Right ventricle myocardium inferior (tissue), 1 donor: ENCODE measurements at regions of chr16 and their contacts with region 1.

Region 1: DNA sequence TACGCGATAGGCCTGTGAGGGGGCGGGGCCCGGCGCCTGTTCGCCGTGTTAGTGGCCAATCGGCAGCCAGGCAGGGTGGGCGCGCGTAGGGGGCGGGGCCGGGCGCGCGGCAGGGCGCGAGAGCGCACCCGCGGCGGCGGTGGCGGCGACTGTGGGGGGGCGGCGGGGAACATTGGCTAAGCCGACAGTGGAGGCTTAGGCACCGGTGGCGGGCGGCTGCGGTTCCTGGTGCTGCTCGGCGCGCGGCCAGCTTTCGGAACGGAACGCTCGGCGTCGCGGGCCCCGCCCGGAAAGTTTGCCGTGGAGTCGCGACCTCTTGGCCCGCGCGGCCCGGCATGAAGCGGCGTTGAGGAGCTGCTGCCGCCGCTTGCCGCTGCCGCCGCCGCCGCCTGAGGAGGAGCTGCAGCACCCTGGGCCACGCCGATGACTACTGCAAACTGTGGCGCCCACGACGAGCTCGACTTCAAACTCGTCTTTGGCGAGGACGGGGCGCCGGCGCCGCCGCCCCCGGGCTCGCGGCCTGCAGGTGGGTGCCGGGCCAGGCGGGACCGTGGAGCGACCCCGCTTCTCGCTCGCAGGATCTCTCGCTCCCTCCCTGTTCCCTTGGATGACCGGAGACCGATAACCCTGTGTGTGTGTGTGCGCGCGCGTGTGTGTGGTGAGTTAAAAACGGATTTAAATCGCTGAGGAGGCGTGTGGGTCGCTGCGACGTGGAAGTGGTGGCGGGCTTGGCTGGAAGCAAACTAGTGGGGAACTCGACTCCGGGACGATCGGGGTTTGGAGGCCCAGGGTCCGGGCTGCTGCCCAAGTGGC is at the start of gene NFATC3:
- DNase-seq: peak; percentile 100
- ATAC-seq: peak; percentile 93
- total RNA-seq, gene NFATC3: 23.7 TPM

Region 2: DNA sequence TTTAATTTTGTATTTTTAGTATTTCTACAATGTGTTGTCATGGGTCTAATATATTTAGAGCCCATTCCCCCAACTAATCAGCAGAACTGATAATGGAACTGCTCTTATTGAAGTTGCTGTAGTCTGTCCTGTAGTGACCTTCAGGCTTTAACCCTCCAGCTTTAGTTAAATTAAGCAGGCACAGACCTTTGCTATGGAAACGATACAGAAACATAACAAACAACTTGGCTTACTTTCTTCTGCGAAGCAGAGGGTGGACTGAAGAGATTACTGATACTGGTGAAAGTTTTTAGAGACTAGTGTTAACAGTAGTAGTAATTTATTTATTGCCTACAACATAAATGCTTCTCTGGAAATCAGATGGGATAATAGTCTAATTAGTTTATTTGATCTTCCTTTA is 61.1 kb after region 1 on chr16:
- intact Hi-C with region 1: loop called (anchors 5 kb)
- DNase-seq: no peak
- ATAC-seq: peak; percentile 86